ENCODE measurements at regions of chr11 and their contacts with region 1.

Region 1: GRCh38 chr11:56783448-56784041 is 35.0 kb upstream of the OR9G4 start:
- DNase-seq: peak; percentile 25 to 79
- ATAC-seq: peak; percentile 64 to 71; a peak in 5 of 6 replicates
- H3K4me3 ChIP-seq: peak overlapping the region; percentile 30
- H3K27ac ChIP-seq: no peak overlapping the region
- H3K4me1 ChIP-seq: no peaks in the 10 kb centered on the region
- CTCF ChIP-seq: peak; percentile 87
- EP300 ChIP-seq: no peak
- POLR2A ChIP-seq: no peak
- RAD21 ChIP-seq: peak; percentile 76 to 87

Region 2: DNA sequence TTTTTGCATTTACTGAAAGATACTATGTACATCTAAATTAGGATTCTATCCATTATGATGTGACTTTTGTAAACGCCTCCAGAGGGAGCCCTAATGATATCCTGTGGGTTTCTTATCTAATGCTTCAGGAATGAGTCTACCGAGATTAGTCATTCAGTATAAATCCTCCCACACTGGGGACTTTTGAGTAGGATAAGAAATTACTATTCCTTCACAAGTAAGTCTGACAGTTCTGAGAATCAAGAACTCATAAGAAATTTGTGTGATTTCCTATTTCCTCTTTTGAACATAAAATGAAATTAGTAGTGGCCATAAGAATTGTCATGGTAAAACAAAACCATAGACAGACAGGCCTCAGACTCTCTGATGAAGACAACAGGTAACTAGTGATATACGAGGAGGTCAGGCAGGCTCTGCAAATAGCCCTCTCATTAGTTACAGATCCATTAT is 158.9 kb before region 1 on chr11:
- CTCF ChIA-PET with region 1: interaction called, 30 read pairs
- POLR2A ChIA-PET with region 1: no interaction called
- DNase-seq: peak; percentile 62 to 77
- ATAC-seq: peak; percentile 95 to 98
- H3K4me3 ChIP-seq: no peak overlapping the region
- H3K27ac ChIP-seq: no peak overlapping the region
- H3K4me1 ChIP-seq: peaks cover 3% of the 10 kb centered on the region; the same call in 1 of the 3 replicates
- CTCF ChIP-seq: peak; percentile 70
- EP300 ChIP-seq: no peak
- POLR2A ChIP-seq: no peak
- RAD21 ChIP-seq: peak; percentile 69 to 72

Region 3: DNA sequence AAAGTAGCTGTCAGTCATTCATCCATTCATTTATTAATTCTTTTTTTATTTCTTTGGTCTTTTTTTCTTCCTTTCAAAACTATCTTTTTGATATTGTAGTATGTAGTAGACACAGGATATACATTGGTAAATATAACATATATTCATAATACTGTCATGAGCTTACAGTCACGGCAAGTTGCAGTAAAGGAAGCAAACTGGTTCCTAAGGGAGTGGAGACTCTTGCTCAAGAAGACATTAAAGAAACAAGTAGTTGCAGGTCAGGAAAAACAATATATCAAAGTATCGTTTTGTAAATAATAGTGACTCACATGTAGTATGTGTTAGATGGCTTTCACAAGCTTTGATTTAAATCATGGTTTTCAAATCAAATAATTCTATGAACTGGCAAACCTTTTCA is 112.6 kb before region 1 on chr11:
- CTCF ChIA-PET with region 1: no interaction called
- POLR2A ChIA-PET with region 1: no interaction called
- DNase-seq: no peak
- ATAC-seq: no peak
- H3K4me3 ChIP-seq: no peak overlapping the region
- H3K27ac ChIP-seq: no peak overlapping the region
- H3K4me1 ChIP-seq: no peaks in the 10 kb centered on the region
- CTCF ChIP-seq: no peak
- EP300 ChIP-seq: no peak
- POLR2A ChIP-seq: no peak
- RAD21 ChIP-seq: no peak

Region 4: GRCh38 chr11:56764976-56765375 is 18.6 kb before region 1 on chr11:
- CTCF ChIA-PET with region 1: interaction called, 10 read pairs
- POLR2A ChIA-PET with region 1: no interaction called
- DNase-seq: no peak
- ATAC-seq: peak; percentile 24 to 34; a peak in 1 of 6 replicates
- H3K4me3 ChIP-seq: no peak overlapping the region
- H3K27ac ChIP-seq: no peak overlapping the region
- H3K4me1 ChIP-seq: peaks cover 6% of the 10 kb centered on the region; the same call in 2 of the 3 replicates
- CTCF ChIP-seq: no peak
- EP300 ChIP-seq: no peak
- POLR2A ChIP-seq: no peak
- RAD21 ChIP-seq: no peak

Measured in A549 (cell line).